Activated T-helper 2 cell treated with anti-CD3 and anti-CD28 coated beads, Interferon-gamma antibody, Interleukin-2, Interleukin-4, amounts not matched to agents 10 μg/mL and 5 μg/mL and 100 μg/mL, durations not matched to agents 14 hours and 24 hours and 36 hours (primary cell): ENCODE measurements at regions of chr16 and their contacts with region 1.

Region 1: DNA sequence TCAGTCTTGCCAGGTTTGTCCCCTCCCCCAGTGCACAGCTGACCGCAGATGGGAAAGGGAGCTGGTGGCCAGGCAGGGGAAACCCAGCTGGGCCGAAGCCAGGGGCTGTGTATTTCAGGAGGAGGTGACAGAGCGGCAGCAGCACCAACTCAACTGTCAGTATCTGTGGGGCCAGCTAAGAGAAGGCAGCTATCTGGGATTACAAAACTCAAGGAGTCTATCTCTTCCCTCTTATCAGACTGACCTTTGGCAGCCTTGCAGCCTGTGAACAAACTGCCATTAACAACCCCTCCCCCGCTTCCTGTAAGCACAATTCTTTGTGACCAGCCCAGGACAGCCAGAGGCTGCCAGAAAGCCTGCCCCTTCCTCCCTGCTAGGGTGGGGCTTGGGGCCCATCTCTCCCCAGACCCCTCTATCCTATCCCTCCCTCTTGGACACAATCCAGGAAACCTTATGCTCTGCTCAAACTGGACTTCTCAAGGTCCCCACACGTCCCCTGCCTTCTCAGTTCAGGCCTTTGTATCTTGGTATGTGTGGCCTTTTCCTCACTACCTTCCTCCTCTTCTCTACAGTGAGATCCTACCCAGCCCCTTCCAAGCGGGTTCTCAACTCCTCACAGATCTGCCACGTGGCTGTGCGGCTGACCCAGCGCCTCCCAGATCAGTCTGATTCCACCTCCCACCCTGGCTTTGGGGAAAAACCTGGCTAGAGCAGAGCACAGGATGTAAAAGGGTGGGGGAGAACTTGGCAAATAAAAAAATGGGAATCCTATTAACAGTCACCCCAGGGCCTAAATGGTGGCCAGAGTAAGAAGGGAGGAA is 10.5 kb downstream of the ST3GAL2 start:
- DNase-seq: peak; percentile 33
- H3K4me3 Mint-ChIP-seq: peak overlapping the region; percentile 45
- H3K27ac Mint-ChIP-seq: peak overlapping the region; percentile 75
- H3K4me1 Mint-ChIP-seq: peaks cover 45% of the 10 kb centered on the region
- H3K27me3 Mint-ChIP-seq: no peaks in the 10 kb centered on the region

Region 2: GRCh38 chr16:70402916-70403659 is 25.3 kb before region 1 on chr16:
- intact Hi-C with region 1: loop called (anchors 2 kb)
- DNase-seq: no peak
- H3K4me3 Mint-ChIP-seq: no peak overlapping the region
- H3K27ac Mint-ChIP-seq: peak overlapping the region; percentile 8
- H3K4me1 Mint-ChIP-seq: peaks cover 36% of the 10 kb centered on the region
- H3K27me3 Mint-ChIP-seq: no peaks in the 10 kb centered on the region

Region 3: GRCh38 chr16:70438969-70439862 is 10.8 kb after region 1 on chr16 and contains the start of gene ST3GAL2:
- intact Hi-C with region 1: loop called (anchors 1 kb)
- DNase-seq: peak; percentile 91
- H3K4me3 Mint-ChIP-seq: peak within 1 kb of the TSS; percentile 91
- H3K27ac Mint-ChIP-seq: peak within 1 kb of the TSS; percentile 89
- H3K4me1 Mint-ChIP-seq: peaks cover 21% of the 10 kb centered on the region
- H3K27me3 Mint-ChIP-seq: no peaks in the 10 kb centered on the region
- total RNA-seq, gene ST3GAL2: 33.0 and 35.1 TPM in 2 replicates

Region 4: DNA sequence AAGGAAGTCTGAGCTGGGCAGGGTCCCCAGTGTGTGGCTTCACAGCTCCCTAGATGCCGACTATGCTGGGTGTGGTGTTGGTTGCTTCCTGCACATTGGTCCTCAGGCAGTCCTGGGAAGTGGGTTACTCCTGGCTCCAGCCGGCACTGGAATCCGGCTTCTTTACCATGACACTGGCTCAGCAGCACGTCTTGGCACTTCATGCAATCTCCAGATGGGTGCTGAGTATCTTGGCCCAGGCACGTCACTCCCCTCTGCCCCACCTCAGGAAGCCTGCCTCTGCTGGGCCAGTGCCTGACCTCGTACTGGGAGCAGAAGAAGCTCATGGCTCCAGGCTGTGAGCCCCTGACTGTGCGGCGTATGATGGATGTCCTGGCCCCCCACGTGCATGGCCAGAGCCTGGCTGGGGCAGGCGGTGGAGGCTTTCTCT is 50.5 kb after region 1 on chr16:
- intact Hi-C with region 1: loop called (anchors 2 kb)
- DNase-seq: no peak
- H3K4me3 Mint-ChIP-seq: no peak overlapping the region
- H3K27ac Mint-ChIP-seq: peak overlapping the region; percentile 28
- H3K4me1 Mint-ChIP-seq: peaks cover 18% of the 10 kb centered on the region
- H3K27me3 Mint-ChIP-seq: no peaks in the 10 kb centered on the region